Heart left ventricle (tissue), 16 donors: ENCODE measurements at regions of chr19 and their contacts with region 1.

Region 1: DNA sequence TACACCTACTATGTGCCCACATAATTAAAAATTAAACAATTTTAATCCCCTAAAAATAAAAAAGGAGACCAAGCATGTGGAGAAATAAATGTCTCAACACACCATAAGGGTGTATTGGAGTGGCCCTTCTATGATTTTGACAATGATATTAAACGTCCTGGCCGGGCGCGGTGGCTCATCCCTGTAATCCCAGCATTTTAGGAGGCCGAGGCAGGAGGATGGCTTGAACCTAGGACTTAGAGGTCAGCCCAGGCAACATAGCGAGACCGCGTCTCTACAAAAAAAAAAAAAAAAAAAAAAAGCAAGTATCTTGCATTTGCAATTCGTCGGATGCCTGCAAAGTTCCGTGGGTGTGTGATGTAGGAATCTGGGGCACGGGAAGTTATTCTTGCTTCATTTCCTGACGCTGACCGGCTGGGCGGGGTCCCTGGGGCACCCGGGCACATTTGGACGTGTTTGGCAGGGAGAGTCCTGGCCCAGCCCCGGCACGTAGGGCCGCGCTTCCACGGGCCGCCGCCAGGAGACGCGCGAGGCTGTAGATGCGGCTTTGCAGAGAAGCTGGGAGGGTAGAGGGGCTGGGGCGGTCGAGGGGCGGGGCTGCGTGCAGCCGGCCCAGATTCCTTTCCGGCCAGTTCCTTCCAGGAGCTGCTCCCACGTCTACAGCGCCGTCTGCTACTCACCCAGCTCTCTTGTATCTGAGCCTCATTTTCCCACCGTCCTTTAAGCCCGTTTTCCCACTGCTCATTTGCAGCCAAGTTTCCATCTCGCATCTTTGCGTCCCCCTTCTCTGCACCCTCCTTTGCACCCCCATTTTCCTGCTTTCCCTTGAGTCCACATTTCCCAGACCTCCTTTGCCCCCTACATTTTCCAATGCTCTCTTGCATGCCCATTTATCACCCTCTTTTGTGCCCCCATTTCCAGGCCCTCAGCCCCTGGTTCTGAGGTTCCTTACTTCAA is 2.2 kb upstream of the TSPAN16 start:
- DNase-seq: peak; percentile 92 to 98 (median 96)
- ATAC-seq: peak; percentile 88 to 99 (median 98)
- H3K4me3 ChIP-seq: peak overlapping the region in 10 of 12 donors; percentile 9 to 43 (median 18)
- H3K27ac ChIP-seq: peak overlapping the region in 11 of 12 donors; percentile 5 to 74 (median 52)
- H3K4me1 ChIP-seq: peaks cover 0 to 32% (median 6%) of the 10 kb centered on the region in 12 donors
- H3K27me3 ChIP-seq: no peaks in the 10 kb centered on the region
- CTCF ChIP-seq: peak; percentile 95 to 100 (median 98)
- POLR2A ChIP-seq: peak in 1 of 2 donors; percentile 23

Region 2: DNA sequence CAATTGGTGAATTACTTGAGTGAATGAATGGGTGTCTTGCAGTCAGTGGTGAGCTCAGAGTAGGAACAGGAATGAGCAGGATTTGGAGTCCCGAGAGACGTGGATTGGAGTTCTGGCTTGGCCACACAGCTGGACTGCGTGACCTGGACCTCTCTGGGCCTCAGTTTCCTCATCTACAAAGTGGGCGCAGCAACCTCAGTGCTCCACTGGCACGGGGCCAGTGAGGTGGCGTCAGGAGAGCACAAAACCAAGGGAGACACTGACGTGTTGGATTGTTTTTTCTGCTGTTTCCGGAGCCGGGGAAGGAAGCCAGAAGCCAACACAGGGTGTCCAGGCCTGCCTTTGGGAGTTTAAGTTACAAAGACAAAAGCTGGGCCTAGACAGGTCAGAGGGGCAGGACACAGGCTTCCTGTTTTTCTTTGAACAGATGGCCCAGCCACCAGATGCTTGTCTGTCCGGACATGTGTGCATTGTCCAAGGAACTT is 24.9 kb before region 1 on chr19:
- intact Hi-C with region 1: no loop called
- DNase-seq: peak; percentile 88 to 92 (median 88)
- ATAC-seq: peak; percentile 86 to 89 (median 88)
- H3K4me3 ChIP-seq: no peak overlapping the region
- H3K27ac ChIP-seq: peak overlapping the region; percentile 66 to 92 (median 80)
- H3K4me1 ChIP-seq: peaks cover 4 to 50% (median 26%) of the 10 kb centered on the region in 12 donors
- H3K27me3 ChIP-seq: peaks cover 0 to 3% (median 0%) of the 10 kb centered on the region in 9 donors
- CTCF ChIP-seq: no peak
- POLR2A ChIP-seq: no peak

Region 3: DNA sequence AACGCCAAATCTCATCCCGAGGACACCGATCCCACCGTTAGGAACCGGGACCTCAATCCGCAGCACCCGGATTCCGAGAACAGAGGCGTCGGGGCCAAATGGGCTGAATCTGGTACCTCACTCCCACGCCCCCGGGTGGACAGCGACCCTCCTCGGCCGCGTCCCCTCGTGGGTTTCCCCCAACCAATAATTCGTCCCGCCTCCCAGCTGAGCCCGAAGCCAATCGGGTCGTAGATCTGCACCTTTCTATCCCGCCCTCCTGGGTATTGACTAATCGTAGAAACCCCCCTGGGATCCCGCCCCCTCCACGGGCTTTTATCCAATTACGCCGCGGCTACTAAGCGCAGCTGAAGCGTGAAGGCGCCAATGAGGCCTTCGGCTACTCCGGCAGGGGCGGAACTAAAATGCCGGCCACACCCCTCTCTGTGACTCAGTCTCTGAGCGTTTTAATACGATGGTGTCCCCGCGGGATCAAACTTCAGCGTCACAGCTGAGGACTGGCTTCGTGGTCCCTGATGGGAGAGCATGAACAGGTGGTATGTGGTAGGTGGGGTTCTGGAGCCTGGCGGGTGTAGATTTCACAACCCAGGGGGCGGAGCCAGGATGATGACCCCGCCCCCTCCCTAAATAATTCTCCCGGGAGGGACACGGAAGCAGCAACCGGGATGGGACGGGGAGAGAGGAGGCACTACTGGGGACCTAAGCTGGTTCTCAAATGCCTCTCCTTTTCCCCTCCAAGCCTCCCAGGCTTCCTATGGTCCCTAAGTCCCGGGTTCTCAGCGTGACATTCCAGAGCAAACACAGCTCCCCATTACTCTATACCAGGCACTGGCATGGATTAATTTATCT is 52.6 kb after region 1 on chr19 and contains the starts of genes CCDC159 and TMEM205:
- intact Hi-C with region 1: loop called in 1 of 10 experiments (anchors 5 kb)
- DNase-seq: peak; percentile 98 to 99 (median 99)
- ATAC-seq: peak; percentile 92 to 98 (median 97)
- H3K4me3 ChIP-seq: peak within 1 kb of the TSS; percentile 42 to 87 (median 78)
- H3K27ac ChIP-seq: peak within 1 kb of the TSS; percentile 48 to 92 (median 84)
- H3K4me1 ChIP-seq: peaks cover 0 to 32% (median 22%) of the 10 kb centered on the region in 12 donors
- H3K27me3 ChIP-seq: no peaks in the 10 kb centered on the region
- CTCF ChIP-seq: peak in 5 of 12 donors; percentile 12 to 37 (median 25)
- POLR2A ChIP-seq: peak; percentile 17 to 94
- total RNA-seq, gene CCDC159: 13.6 to 26.2 (median 21.9) TPM
- total RNA-seq, gene TMEM205: 68.3 to 372 (median 83.9) TPM

Region 4: GRCh38 chr19:11380653-11381534 is 87.2 kb after region 1 on chr19:
- intact Hi-C with region 1: loop called in 7 of 10 experiments (anchors 5 to 10 kb)
- DNase-seq: peak; percentile 95 to 96 (median 96)
- ATAC-seq: peak; percentile 88 to 93 (median 92)
- H3K4me3 ChIP-seq: peak overlapping the region; percentile 47 to 85 (median 66)
- H3K27ac ChIP-seq: peak overlapping the region; percentile 35 to 89 (median 84)
- H3K4me1 ChIP-seq: peaks cover under 1 to 74% (median 41%) of the 10 kb centered on the region in 12 donors
- H3K27me3 ChIP-seq: peaks cover 0 to 16% (median 3%) of the 10 kb centered on the region in 9 donors
- CTCF ChIP-seq: peak; percentile 50 to 90 (median 79)
- POLR2A ChIP-seq: peak in 1 of 2 donors; percentile 87

Region 5: GRCh38 chr19:11446652-11447301 is 153.1 kb after region 1 on chr19:
- intact Hi-C with region 1: loop called in 8 of 10 experiments (anchors 1 to 10 kb)
- DNase-seq: peak; percentile 41 to 84 (median 50)
- ATAC-seq: peak; percentile 33 to 78 (median 70)
- H3K4me3 ChIP-seq: no peak overlapping the region
- H3K27ac ChIP-seq: no peak overlapping the region
- H3K4me1 ChIP-seq: peaks cover 0 to 8% (median 0%) of the 10 kb centered on the region in 12 donors
- H3K27me3 ChIP-seq: peaks cover 0 to 3% (median 0%) of the 10 kb centered on the region in 9 donors
- CTCF ChIP-seq: peak; percentile 56 to 82 (median 70)
- POLR2A ChIP-seq: no peak

Region 6: DNA sequence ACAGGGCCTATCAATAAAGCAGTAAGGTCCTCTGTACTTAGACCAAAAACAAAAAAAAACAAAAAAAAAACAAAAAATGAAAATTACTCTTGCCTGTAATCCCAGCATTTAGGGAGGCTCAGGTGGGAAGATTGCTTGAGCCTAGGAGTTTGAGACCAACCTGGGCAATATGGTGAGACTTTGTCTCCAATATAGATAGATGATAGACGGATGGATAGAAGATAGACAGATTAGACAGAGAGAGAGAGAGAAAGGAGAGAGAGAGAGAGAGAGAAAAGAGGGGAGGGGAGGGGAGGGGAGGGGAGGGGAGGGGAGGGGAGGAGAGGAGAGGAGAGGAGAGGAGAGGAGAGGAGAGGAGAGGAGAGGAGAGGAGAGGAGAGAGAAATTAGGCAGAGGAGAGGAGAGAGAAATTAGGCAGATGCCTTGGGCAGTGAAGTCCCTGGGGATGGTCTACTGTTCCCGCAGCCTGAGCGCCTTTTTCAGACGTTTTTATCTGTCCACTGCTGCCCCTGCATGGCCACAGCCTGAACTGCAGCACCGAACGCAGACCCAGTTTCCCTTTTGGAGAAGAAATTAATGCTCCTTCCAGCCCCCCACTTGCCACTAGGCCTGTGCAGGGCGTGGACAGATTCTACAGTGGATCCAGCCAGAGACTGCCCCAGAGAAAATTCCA is 293.7 kb after region 1 on chr19:
- intact Hi-C with region 1: loop called in 5 of 10 experiments (anchors 5 to 10 kb)
- DNase-seq: peak; percentile 65 to 83 (median 73)
- ATAC-seq: peak; percentile 49 to 88 (median 88)
- H3K4me3 ChIP-seq: no peak overlapping the region
- H3K27ac ChIP-seq: no peak overlapping the region
- H3K4me1 ChIP-seq: peaks cover 0 to 23% (median 0%) of the 10 kb centered on the region in 12 donors
- H3K27me3 ChIP-seq: no peaks in the 10 kb centered on the region
- CTCF ChIP-seq: peak; percentile 73 to 94 (median 82)
- POLR2A ChIP-seq: no peak

Region 7: GRCh38 chr19:11699931-11700794 is 406.5 kb after region 1 on chr19:
- intact Hi-C with region 1: no loop called
- DNase-seq: no peak
- ATAC-seq: no peak
- H3K4me3 ChIP-seq: no peak overlapping the region
- H3K27ac ChIP-seq: no peak overlapping the region
- H3K4me1 ChIP-seq: peaks cover 0 to 4% (median 2%) of the 10 kb centered on the region in 12 donors
- H3K27me3 ChIP-seq: no peaks in the 10 kb centered on the region
- CTCF ChIP-seq: peak; percentile 55 to 79 (median 66)
- POLR2A ChIP-seq: no peak